Ascending aorta (tissue), 2 donors: ENCODE measurements at regions of chr17 and their contacts with region 1.

Region 1: DNA sequence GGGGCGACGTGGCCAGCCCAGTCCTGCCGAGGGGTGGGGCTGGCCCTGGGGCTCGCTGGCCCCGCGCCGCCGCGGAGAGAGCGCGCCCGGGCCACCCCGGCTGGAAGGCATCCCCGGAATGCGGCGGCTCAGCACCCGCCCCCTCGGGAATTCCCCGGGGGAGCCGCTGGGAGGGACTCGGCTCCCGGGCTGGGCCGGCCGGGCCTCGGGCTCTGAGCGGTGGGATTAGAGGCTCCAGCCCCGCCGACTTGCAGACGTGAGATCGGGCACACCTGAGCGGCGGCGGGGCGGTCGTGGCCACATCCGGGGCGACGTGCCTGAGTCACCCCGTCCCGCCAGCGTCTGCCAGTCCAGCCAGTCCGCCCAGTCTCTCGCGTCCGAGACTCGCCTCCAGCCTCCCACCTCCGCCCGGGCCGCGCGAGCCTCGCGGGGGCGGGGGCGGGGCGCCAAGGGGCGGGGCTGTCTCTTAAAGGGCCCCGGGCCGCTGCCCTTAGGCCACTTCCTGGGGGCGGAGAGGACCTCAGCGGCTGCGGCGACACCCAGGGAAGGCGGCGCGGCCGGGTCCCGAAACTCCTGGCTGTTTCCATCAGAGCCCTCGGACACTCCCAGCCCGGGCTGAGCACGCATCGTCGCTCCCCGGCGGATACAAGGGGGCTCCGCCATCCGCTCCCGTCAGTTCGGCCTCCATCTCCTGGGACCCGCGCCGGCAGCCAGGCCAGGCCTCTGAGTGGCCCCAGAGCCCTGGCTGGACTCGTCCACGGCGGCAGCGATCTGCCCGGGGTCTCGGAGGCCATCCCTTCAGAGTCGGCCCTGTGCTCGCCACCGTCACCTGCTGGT is at the start of gene KCTD11:
- DNase-seq: peak; percentile 69 to 97
- H3K4me3 ChIP-seq: peak within 1 kb of the TSS; percentile 71 to 98
- H3K27ac ChIP-seq: peak within 1 kb of the TSS; percentile 96 to 100
- H3K4me1 ChIP-seq: peaks cover 11 to 36% of the 10 kb centered on the region in 2 donors
- H3K27me3 ChIP-seq: no peaks in the 10 kb centered on the region
- CTCF ChIP-seq: peak in 2 of 3 experiments; percentile 57 to 59
- total RNA-seq, gene KCTD11: 14.6 TPM

Region 2: DNA sequence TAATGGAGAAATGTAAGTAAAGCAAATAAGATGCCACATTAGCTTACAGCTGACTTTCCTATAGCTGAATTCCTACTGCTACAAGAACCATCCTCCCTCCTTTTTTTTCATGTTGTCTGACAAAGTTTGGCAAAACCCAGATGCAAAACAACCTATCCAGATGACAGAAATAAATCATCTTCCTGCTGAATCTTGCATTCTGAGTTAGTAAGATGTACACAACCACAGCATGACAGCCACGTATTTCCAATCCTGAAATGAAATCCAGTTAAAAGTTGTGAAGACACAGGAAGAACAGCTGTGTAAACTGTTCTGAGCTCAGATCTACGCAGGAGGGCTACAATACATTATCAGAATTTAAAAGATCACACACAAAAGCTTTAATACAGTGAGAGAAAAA is 1878.0 kb before region 1 on chr17:
- intact Hi-C with region 1: no loop called
- DNase-seq: no peak
- H3K4me3 ChIP-seq: no peak overlapping the region
- H3K27ac ChIP-seq: no peak overlapping the region
- H3K4me1 ChIP-seq: no peaks in the 10 kb centered on the region
- H3K27me3 ChIP-seq: no peaks in the 10 kb centered on the region
- CTCF ChIP-seq: no peak

Region 3: GRCh38 chr17:7306911-7307686 is 44.8 kb before region 1 on chr17 and contains the start of gene EIF5A:
- intact Hi-C with region 1: loop called (anchors 2 kb)
- DNase-seq: peak; percentile 98 to 99
- H3K4me3 ChIP-seq: peak within 1 kb of the TSS; percentile 76 to 99
- H3K27ac ChIP-seq: peak within 1 kb of the TSS; percentile 97 to 100
- H3K4me1 ChIP-seq: peaks cover 3 to 26% of the 10 kb centered on the region in 2 donors
- H3K27me3 ChIP-seq: no peaks in the 10 kb centered on the region
- CTCF ChIP-seq: no peak
- total RNA-seq, gene EIF5A: 248 TPM

Region 4: GRCh38 chr17:7336240-7337175 is 15.4 kb before region 1 on chr17 and contains the start of gene ACAP1:
- intact Hi-C with region 1: no loop called
- DNase-seq: peak in 1 of 2 donors; percentile 61
- H3K4me3 ChIP-seq: peak within 1 kb of the TSS in 1 of 2 donors; percentile 46
- H3K27ac ChIP-seq: no peak within 1 kb of the TSS
- H3K4me1 ChIP-seq: no peaks in the 10 kb centered on the region
- H3K27me3 ChIP-seq: no peaks in the 10 kb centered on the region
- CTCF ChIP-seq: no peak
- total RNA-seq, gene ACAP1: 12.0 TPM

Region 5: DNA sequence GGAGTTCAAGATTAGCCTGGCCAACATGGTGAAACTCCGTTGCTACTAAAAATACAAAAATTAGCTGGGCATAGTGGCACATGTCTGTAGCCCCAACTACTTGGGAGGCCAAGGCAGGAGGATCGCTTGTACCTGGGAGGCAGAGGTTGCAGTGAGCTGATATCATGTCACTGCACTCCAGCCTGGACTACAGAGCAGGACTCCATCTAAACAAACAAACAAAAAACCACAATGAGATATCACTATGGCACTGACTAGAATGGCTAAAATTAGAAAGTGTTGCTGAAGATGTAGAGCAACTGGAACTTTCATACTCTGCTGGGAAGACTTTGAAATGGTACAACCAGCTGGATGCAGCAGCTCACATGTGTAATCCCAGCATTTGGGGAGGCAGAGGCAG is 22.5 kb after region 1 on chr17:
- intact Hi-C with region 1: no loop called
- DNase-seq: no peak
- H3K4me3 ChIP-seq: no peak overlapping the region
- H3K27ac ChIP-seq: no peak overlapping the region
- H3K4me1 ChIP-seq: no peaks in the 10 kb centered on the region
- H3K27me3 ChIP-seq: no peaks in the 10 kb centered on the region
- CTCF ChIP-seq: no peak

Region 6: GRCh38 chr17:7403977-7404736 is 52.3 kb after region 1 on chr17 and contains the start of gene TMEM256:
- intact Hi-C with region 1: loop called (anchors 1 kb)
- DNase-seq: peak; percentile 97 to 100
- H3K4me3 ChIP-seq: peak within 1 kb of the TSS; percentile 69 to 85
- H3K27ac ChIP-seq: peak within 1 kb of the TSS; percentile 89 to 92
- H3K4me1 ChIP-seq: peaks cover 0 to 22% of the 10 kb centered on the region in 2 donors
- H3K27me3 ChIP-seq: no peaks in the 10 kb centered on the region
- CTCF ChIP-seq: peak in 2 of 3 experiments; percentile 5 to 25
- total RNA-seq, gene TMEM256: 241 TPM

Region 7: DNA sequence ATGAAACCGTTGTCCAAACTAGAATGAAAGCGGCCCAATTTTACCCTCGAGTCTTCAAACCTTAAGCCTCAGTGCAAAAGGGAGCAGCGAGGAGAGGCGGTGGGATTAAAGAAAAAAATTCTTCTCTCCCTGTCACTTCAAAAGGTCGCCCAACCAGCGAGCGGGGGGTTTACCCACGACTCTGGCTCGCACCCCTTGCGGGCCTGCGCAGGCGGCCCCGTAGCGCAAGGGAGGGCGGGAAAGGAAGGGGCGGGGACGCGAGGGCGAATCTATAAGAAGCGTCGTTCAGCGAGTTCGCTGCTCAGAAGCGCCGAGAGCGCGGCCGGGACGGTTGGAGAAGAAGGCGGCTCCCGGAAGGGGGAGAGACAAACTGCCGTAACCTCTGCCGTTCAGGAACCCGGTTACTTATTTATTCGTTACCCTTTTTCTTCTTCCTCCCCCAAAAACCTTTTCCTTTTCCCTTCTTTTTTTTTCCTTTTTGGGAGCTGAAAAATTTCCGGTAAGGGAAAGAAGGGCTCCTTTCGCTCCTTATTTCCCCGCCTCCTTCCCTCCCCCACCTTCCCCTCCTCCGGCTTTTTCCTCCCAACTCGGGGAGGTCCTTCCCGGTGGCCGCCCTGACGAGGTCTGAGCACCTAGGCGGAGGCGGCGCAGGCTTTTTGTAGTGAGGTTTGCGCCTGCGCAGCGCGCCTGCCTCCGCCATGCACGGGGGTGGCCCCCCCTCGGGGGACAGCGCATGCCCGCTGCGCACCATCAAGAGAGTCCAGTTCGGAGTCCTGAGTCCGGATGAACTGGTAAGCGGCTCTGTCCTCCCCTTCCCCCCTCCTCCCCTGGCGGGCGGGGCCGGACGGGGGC is 132.4 kb after region 1 on chr17 and contains the start of gene POLR2A:
- intact Hi-C with region 1: loop called (anchors 1 kb)
- DNase-seq: peak; percentile 96 to 99
- H3K4me3 ChIP-seq: peak within 1 kb of the TSS; percentile 71 to 84
- H3K27ac ChIP-seq: peak within 1 kb of the TSS; percentile 98 to 100
- H3K4me1 ChIP-seq: peaks cover 12 to 50% of the 10 kb centered on the region in 2 donors
- H3K27me3 ChIP-seq: no peaks in the 10 kb centered on the region
- CTCF ChIP-seq: no peak
- total RNA-seq, gene POLR2A: 69.5 TPM

Region 8: GRCh38 chr17:7495906-7496434 is 144.1 kb after region 1 on chr17:
- intact Hi-C with region 1: no loop called
- DNase-seq: no peak
- H3K4me3 ChIP-seq: no peak overlapping the region
- H3K27ac ChIP-seq: no peak overlapping the region
- H3K4me1 ChIP-seq: peaks cover 0 to 3% of the 10 kb centered on the region in 2 donors
- H3K27me3 ChIP-seq: no peaks in the 10 kb centered on the region
- CTCF ChIP-seq: no peak

Region 9: GRCh38 chr17:7572588-7573323 is 220.9 kb after region 1 on chr17:
- intact Hi-C with region 1: loop called (anchors 1 kb)
- DNase-seq: peak; percentile 99 to 100
- H3K4me3 ChIP-seq: peak overlapping the region; percentile 78 to 94
- H3K27ac ChIP-seq: peak overlapping the region; percentile 93 to 99
- H3K4me1 ChIP-seq: peaks cover 0 to 15% of the 10 kb centered on the region in 2 donors
- H3K27me3 ChIP-seq: no peaks in the 10 kb centered on the region
- CTCF ChIP-seq: no peak

Region 10: DNA sequence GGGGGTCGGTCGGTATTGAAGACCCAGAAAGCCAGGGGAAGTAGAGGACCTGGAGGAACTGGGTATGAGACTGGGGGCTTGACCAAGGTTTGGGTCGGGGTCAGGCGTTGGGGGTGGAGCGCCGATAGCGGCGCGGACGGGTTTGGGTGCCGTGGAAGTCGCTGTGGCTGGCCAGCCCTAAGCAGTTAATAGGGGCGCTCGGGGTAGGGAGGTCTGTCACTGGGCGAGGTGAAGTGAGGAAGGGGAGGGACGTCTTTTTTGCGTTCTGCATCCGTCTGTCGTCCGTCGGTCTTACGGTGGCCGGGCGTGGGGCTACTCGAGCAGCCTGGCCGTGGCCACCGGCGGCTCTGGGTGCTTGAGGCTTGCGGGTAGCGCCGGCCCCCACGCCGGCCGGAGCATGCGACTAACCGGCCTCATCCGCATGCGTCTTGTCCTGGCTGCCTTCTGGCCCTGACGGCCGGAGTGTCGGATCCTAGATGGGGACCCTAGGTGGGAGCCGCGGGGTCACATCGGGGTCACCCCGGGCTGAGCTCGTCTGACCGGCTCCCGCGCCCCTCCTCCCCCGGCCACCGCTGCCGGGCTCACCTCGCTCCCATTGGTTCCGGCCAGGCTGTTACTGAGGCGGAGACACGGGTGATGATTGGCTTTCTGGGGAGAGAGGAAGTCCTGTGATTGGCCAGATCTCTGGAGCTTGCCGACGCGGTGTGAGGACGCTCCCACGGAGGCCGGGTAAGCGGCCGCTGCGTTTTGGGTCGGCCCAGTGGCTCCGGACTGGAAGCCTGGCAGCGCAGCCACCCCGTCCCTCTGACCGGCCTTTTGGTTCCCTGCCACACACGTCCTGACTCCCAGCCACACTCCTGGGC is 492.6 kb after region 1 on chr17:
- intact Hi-C with region 1: loop called (anchors 5 kb)
- DNase-seq: peak; percentile 81 to 97
- H3K4me3 ChIP-seq: peak overlapping the region; percentile 80 to 88
- H3K27ac ChIP-seq: peak overlapping the region; percentile 97 to 99
- H3K4me1 ChIP-seq: peaks cover 6 to 18% of the 10 kb centered on the region in 2 donors
- H3K27me3 ChIP-seq: no peaks in the 10 kb centered on the region
- CTCF ChIP-seq: no peak